AG04449 (cell line): ENCODE measurements at regions of chr4 and their contacts with region 1.

Region 1: GRCh38 chr4:158253350-158253980 is 43.2 kb downstream of the TMEM144 start:
- DNase-seq: peak; percentile 9
- H3K4me3 ChIP-seq: no peak overlapping the region
- CTCF ChIP-seq: peak; percentile 70

Region 2: DNA sequence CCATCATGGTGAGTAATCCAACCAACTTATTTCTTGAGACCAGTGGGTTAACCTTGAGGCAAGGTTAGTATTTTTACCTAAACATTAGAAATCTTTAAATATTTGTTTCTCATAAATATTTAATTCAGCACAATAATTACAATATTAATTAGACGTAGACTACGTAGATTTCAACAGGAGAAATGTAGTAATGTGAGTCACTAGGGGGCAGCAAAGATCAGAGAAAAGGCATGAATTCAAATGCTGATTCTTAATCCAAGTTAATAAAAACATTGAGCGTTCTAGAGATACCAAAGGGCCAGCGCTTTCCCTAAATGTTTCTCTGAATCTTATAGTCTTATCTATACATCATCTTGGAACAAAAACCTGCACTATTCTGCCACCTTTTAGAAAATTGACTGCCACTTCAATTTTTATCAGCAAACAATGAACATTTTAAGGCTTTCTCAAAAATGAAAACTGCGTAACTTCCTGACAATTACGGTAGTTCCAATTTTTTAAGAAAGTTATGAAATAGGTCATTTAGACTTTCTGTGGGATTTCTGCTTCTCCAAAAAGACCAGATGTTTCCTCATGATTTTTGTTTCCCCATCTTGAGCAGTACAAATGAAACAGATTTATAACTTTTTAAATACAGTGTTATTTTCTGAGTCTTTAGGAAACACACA is 261.3 kb before region 1 on chr4:
- CTCF ChIA-PET with region 1: interaction called, 10 read pairs
- POLR2A ChIA-PET with region 1: no interaction called
- DNase-seq: no peak
- H3K4me3 ChIP-seq: no peak overlapping the region
- CTCF ChIP-seq: peak; percentile 28

Region 3: GRCh38 chr4:158243071-158243470 is 10.4 kb before region 1 on chr4:
- CTCF ChIA-PET with region 1: interaction called, 12 read pairs
- POLR2A ChIA-PET with region 1: no interaction called
- DNase-seq: no peak
- H3K4me3 ChIP-seq: no peak overlapping the region
- CTCF ChIP-seq: no peak

Region 4: GRCh38 chr4:158277558-158277957 is 24.1 kb after region 1 on chr4:
- CTCF ChIA-PET with region 1: interaction called, 23 read pairs
- POLR2A ChIA-PET with region 1: no interaction called
- DNase-seq: no peak
- H3K4me3 ChIP-seq: no peak overlapping the region
- CTCF ChIP-seq: no peak

Region 5: DNA sequence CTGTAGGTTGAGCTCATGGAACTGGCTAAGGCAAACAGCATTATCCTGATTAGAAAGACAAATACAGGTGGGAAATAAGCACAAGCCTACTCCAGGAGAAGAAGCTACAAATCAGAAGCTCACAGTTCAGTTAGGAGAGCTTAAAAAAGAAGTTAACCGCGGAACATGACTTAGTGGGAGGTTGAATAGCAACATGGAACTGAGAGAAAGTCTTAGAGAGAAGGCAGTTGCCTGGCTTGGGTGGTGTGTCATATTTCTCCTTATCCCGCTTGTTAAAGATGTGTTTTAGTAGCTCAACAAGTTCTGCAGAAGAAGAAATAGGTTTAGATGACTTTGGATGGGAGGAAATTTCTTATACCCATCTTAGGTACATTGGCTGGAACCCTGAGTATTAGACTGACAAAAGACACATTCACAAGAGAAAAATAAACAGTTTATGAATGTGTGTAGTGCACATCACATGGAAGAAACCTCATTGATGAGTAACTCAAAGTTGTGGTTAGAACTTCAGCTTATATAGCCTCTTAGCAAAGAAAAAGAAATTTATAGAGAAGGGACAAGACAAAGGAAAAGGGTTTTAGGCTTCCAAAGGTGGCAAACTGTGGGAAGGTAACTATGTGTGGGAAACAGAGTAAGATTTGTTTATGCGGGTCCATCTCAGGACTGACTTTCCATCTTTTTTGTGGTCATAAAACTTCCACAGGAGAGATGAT is 230.9 kb after region 1 on chr4:
- CTCF ChIA-PET with region 1: no interaction called
- POLR2A ChIA-PET with region 1: no interaction called
- DNase-seq: no peak
- H3K4me3 ChIP-seq: no peak overlapping the region
- CTCF ChIP-seq: no peak

Region 6: GRCh38 chr4:158630893-158631292 is 377.4 kb after region 1 on chr4:
- CTCF ChIA-PET with region 1: interaction called, 121 read pairs
- POLR2A ChIA-PET with region 1: no interaction called
- DNase-seq: no peak
- H3K4me3 ChIP-seq: no peak overlapping the region
- CTCF ChIP-seq: no peak